Calu3 (cell line): ENCODE measurements at regions of chr5 and their contacts with region 1.

Region 1: DNA sequence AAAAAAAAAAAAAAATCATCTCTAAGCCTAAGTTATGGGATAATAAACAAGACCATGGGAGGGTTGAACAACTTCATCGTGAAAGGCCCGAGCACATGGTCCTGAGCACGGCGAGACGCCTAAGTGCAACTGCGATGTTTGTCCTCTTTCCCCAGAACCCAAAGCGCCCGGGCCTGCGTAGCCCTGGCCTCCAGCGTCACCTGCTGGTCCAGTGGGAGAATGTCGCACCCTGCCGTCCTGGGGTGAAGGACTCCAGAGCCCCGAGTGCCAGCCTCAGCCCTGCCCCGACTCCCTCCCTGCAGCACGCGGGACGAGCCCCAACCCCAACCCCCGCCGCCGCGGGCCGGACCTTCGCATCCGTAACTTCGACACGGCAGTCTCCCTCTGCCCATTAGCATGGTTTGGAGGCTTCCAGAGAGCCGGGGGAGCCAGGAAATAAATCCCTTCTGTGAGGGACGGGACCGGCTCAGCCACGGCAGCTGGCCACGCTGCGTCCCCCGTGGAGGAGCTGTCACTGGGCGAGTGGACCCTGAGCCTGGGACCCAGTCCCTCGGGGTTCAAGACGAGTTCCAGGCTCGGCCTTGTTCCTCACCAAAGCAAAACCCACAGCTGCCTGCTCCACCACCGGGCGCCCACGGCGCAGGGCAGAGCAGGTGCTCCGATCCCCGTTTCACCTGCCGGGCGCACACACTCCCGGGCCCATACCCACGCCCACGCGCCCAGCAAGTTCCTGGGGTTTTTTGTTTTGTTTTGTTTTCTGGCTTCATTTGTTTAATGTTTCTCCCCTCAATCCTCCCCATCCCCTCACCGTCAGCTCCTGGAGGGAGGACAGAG is 132.5 kb upstream of the HAND1 start:
- DNase-seq: peak; percentile 89
- H3K4me3 Mint-ChIP-seq: peak overlapping the region; percentile 48
- H3K27ac Mint-ChIP-seq: no peak overlapping the region
- H3K4me1 Mint-ChIP-seq: peaks cover 9% of the 10 kb centered on the region
- H3K27me3 Mint-ChIP-seq: peaks cover 89% of the 10 kb centered on the region
- CTCF ChIP-seq: peak; percentile 93

Region 2: DNA sequence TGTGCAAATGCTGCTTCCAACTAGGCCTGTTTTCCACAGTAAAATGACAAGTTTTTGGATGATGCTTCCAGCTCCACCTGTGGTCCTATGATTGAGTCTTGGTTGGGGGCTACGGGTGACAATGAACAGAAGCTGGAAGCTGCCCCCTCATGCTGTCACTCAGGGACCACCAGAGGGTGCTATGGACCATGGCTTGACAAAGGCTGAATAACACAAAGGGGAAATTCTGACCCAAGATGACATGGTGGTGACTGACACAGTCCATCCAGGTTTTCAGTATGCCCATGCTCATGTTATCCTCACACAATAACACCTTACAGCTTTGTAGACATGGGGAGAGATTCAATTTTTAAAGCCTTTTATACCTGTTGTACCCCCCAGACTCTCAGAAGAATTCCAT is 188.7 kb before region 1 on chr5:
- CTCF ChIA-PET with region 1: no interaction called
- intact Hi-C with region 1: loop called (anchors 5 kb)
- DNase-seq: peak; percentile 32
- H3K4me3 Mint-ChIP-seq: no peak overlapping the region
- H3K27ac Mint-ChIP-seq: no peak overlapping the region
- H3K4me1 Mint-ChIP-seq: peaks cover 12% of the 10 kb centered on the region
- H3K27me3 Mint-ChIP-seq: no peaks in the 10 kb centered on the region
- CTCF ChIP-seq: peak; percentile 43

Region 3: DNA sequence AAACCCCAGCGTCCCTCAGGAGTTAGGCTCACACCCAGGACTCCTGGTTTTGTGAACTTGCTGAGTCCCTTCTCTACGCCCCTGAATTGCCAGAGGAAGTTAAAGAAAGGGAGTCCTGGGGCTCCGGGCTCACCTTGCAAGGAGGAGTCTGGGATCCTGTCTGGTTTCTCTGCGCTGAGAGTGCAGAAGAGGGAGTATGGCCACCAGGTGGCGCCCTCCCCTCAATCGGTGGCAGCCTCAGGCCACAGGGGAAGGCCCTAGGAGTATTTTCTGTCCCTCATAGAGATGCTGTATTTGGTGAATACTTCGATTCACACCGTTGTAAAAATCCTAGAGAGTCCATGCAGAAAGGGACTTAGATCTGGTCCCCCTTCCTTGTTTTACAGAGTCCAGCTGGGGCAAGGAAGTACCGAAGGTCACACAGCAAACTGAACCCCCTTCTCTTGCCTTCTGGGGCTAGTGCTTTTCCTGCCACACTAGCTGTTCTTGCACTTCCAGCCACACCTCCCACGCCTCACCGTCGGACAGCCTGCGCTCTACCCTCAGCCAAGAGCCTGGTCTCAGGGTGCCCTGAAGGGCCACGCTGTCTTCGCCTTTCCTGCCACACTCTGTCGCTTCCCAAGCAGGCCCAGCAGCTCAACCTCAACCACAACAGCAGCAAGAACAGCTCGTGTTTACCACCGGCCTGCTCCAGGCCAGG is 142.7 kb before region 1 on chr5:
- CTCF ChIA-PET with region 1: interaction called, 8 read pairs
- intact Hi-C with region 1: loop called (anchors 1 kb)
- DNase-seq: peak; percentile 91
- H3K4me3 Mint-ChIP-seq: no peak overlapping the region
- H3K27ac Mint-ChIP-seq: no peak overlapping the region
- H3K4me1 Mint-ChIP-seq: no peaks in the 10 kb centered on the region
- H3K27me3 Mint-ChIP-seq: peaks cover 52% of the 10 kb centered on the region
- CTCF ChIP-seq: peak; percentile 96

Region 4: DNA sequence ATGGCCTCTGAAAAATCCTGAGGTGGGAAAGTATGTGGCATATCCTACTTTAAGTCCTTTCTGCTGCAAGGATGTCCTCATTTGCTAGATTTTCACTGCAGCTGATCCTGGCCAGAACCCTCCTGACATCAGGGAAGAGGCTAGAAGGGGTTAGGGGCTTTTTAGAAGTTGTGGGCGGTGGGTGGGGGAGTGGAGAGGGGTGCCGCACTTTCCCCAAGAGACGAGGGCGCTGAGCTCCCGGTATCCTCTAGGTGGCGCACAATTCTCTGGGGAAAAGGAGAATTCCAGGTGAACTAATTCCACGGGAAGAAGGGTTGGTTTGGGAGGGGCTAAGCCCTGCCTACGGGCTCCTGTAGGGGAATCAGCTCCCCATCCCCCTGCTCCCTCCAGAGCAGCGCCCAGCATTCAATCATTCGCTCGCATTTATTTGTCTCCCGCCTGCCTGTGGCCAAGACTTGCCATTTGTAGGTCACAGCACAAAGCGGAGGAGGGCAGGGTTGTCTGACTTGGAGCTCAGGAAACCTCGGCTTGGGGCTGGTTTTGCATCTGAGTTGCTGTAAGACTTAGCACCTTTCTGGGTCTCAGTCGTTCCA is 89.6 kb before region 1 on chr5:
- CTCF ChIA-PET with region 1: interaction called, 3 read pairs
- intact Hi-C with region 1: loop called (anchors 2 kb)
- DNase-seq: peak; percentile 70
- H3K4me3 Mint-ChIP-seq: no peak overlapping the region
- H3K27ac Mint-ChIP-seq: no peak overlapping the region
- H3K4me1 Mint-ChIP-seq: peaks cover 13% of the 10 kb centered on the region
- H3K27me3 Mint-ChIP-seq: peaks cover 52% of the 10 kb centered on the region
- CTCF ChIP-seq: peak; percentile 86